CD4-positive, alpha-beta T cell (primary cell): ENCODE measurements at regions of chr13 and their contacts with region 1.

Region 1: DNA sequence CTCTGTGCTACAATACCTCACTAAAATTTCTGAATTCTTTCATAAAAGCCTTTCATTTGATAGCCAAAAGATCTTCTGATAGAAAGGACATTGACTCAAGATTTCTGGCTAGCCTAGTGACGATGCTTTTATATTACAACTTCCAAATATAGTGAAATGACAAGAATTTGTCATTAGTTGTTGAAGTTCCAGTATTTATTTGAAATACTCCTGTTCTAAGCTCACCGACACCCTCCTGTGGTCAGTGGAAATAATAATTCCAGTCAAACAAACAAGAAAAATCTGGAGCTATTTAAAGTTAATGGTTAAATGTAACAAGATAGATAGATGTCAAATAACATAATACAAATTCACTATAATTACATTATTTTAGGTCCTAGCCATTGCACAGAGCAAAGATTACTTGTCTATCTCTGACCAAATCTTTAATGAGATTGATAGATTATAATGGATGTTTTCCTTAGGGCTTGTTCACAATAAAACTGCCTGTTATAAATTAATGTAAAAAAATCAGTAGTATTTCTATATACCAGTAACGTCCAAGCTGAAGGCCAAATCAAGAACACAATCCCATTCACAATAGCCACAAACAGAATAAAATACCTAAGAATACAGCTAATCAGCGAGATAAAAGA is 195.5 kb downstream of the RGCC start:
- DNase-seq: peak in 12 of 14 experiments; percentile 7 to 73 (median 32)
- ATAC-seq: peak; percentile 60
- H3K4me3 ChIP-seq: no peak overlapping the region
- H3K4me3 Mint-ChIP-seq: no peak overlapping the region
- H3K27ac ChIP-seq: no peak overlapping the region
- H3K27ac Mint-ChIP-seq: no peak overlapping the region
- H3K4me1 ChIP-seq: no peaks in the 10 kb centered on the region
- H3K4me1 Mint-ChIP-seq: peaks cover 29% of the 10 kb centered on the region
- H3K27me3 ChIP-seq: no peaks in the 10 kb centered on the region
- H3K27me3 Mint-ChIP-seq: no peaks in the 10 kb centered on the region
- CTCF ChIP-seq: peak; percentile 73

Region 2: DNA sequence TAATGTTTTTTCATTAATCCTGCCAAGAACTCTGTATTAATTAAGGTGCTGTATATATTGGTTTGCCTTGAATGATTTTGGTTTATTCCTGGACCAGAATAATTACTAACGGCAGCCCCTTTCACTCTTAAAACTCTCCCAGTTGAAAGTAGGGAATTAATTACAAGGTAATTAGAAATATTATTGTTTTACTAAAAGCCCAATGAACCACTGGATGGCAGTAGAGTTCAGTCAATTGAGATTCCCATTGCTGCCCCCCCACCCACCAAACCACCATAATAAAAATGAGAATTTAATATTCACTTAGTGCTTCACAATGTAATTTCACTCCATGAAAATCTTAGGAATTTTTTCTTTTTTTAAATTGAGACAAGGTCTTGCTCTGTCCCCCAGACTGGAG is 577.8 kb before region 1 on chr13:
- CTCF ChIA-PET with region 1: no interaction called
- POLR2A ChIA-PET with region 1: no interaction called
- intact Hi-C with region 1: loop called in 1 of 2 experiments (anchors 5 kb)
- DNase-seq: peak in 13 of 14 experiments; percentile 3 to 75 (median 20)
- ATAC-seq: peak; percentile 49
- H3K4me3 ChIP-seq: no peak overlapping the region
- H3K4me3 Mint-ChIP-seq: no peak overlapping the region
- H3K27ac ChIP-seq: no peak overlapping the region
- H3K27ac Mint-ChIP-seq: no peak overlapping the region
- H3K4me1 ChIP-seq: no peaks in the 10 kb centered on the region
- H3K4me1 Mint-ChIP-seq: no peaks in the 10 kb centered on the region
- H3K27me3 ChIP-seq: no peaks in the 10 kb centered on the region
- H3K27me3 Mint-ChIP-seq: no peaks in the 10 kb centered on the region
- CTCF ChIP-seq: peak; percentile 53

Region 3: GRCh38 chr13:41222259-41222852 is 430.5 kb before region 1 on chr13:
- CTCF ChIA-PET with region 1: no interaction called
- POLR2A ChIA-PET with region 1: no interaction called
- intact Hi-C with region 1: loop called in 1 of 2 experiments (anchors 10 kb)
- DNase-seq: peak in 13 of 14 experiments; percentile 27 to 74 (median 38)
- ATAC-seq: peak; percentile 91
- H3K4me3 ChIP-seq: no peak overlapping the region
- H3K4me3 Mint-ChIP-seq: no peak overlapping the region
- H3K27ac ChIP-seq: no peak overlapping the region
- H3K27ac Mint-ChIP-seq: no peak overlapping the region
- H3K4me1 ChIP-seq: no peaks in the 10 kb centered on the region
- H3K4me1 Mint-ChIP-seq: no peaks in the 10 kb centered on the region
- H3K27me3 ChIP-seq: no peaks in the 10 kb centered on the region
- H3K27me3 Mint-ChIP-seq: no peaks in the 10 kb centered on the region
- CTCF ChIP-seq: peak; percentile 82

Region 4: GRCh38 chr13:41352935-41353840 is 299.7 kb before region 1 on chr13:
- CTCF ChIA-PET with region 1: interaction called, 5 read pairs
- POLR2A ChIA-PET with region 1: no interaction called
- intact Hi-C with region 1: loop called (anchors 1 to 5 kb)
- DNase-seq: peak; percentile 15 to 85 (median 46)
- ATAC-seq: peak; percentile 51
- H3K4me3 ChIP-seq: no peak overlapping the region
- H3K4me3 Mint-ChIP-seq: peak overlapping the region; percentile 44
- H3K27ac ChIP-seq: peak overlapping the region; percentile 25 to 56
- H3K27ac Mint-ChIP-seq: peak overlapping the region; percentile 72
- H3K4me1 ChIP-seq: peaks cover 34% of the 10 kb centered on the region
- H3K4me1 Mint-ChIP-seq: peaks cover 57% of the 10 kb centered on the region
- H3K27me3 ChIP-seq: no peaks in the 10 kb centered on the region
- H3K27me3 Mint-ChIP-seq: no peaks in the 10 kb centered on the region
- CTCF ChIP-seq: peak; percentile 76

Region 5: DNA sequence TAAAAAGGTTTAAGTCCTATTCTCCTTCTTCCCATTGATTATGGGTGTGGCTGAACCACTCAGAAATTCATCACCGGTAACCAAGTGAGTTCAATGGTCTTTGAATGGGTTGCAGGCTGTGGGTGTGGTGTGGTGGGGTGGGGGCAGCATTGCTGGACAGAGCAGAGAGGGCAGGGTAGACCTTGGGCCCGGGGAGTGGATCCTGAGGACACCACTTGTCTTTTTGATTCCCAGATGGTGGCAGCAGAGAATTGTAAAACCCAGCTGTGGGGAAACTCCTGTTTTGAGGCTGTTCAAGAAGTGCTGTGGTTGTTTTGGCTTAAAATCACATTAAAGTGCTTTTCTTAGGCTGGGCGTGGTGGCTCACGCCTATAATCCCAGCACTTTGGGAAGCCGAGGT is 241.3 kb before region 1 on chr13:
- CTCF ChIA-PET with region 1: interaction called, 12 read pairs
- POLR2A ChIA-PET with region 1: interaction called, 6 read pairs
- intact Hi-C with region 1: loop called (anchors 1 to 2 kb)
- DNase-seq: peak in 9 of 14 experiments; percentile 9 to 75 (median 20)
- ATAC-seq: no peak
- H3K4me3 ChIP-seq: no peak overlapping the region
- H3K4me3 Mint-ChIP-seq: no peak overlapping the region
- H3K27ac ChIP-seq: no peak overlapping the region
- H3K27ac Mint-ChIP-seq: no peak overlapping the region
- H3K4me1 ChIP-seq: peaks cover 4% of the 10 kb centered on the region
- H3K4me1 Mint-ChIP-seq: peaks cover 5% of the 10 kb centered on the region
- H3K27me3 ChIP-seq: no peaks in the 10 kb centered on the region
- H3K27me3 Mint-ChIP-seq: no peaks in the 10 kb centered on the region
- CTCF ChIP-seq: peak; percentile 49

Region 6: GRCh38 chr13:41428155-41428554 is 224.7 kb before region 1 on chr13:
- CTCF ChIA-PET with region 1: no interaction called
- POLR2A ChIA-PET with region 1: no interaction called
- intact Hi-C with region 1: loop called in 1 of 2 experiments (anchors 5 kb)
- DNase-seq: peak in 13 of 14 experiments; percentile 2 to 70 (median 40)
- ATAC-seq: peak; percentile 81
- H3K4me3 ChIP-seq: peak overlapping the region; percentile 29
- H3K4me3 Mint-ChIP-seq: no peak overlapping the region
- H3K27ac ChIP-seq: no peak overlapping the region
- H3K27ac Mint-ChIP-seq: no peak overlapping the region
- H3K4me1 ChIP-seq: peaks cover 10% of the 10 kb centered on the region
- H3K4me1 Mint-ChIP-seq: peaks cover 7% of the 10 kb centered on the region
- H3K27me3 ChIP-seq: peaks cover 0 to 3% of the 10 kb centered on the region in 2 experiments
- H3K27me3 Mint-ChIP-seq: peaks cover 6% of the 10 kb centered on the region
- CTCF ChIP-seq: no peak

Region 7: GRCh38 chr13:41456768-41457588 is 195.9 kb before region 1 on chr13 and contains the start of gene RGCC:
- CTCF ChIA-PET with region 1: interaction called, 5 read pairs
- POLR2A ChIA-PET with region 1: interaction called, 24 read pairs
- intact Hi-C with region 1: loop called in 1 of 2 experiments (anchors 2 kb)
- DNase-seq: peak; percentile 74 to 99 (median 94)
- ATAC-seq: peak; percentile 72
- H3K4me3 ChIP-seq: peak within 1 kb of the TSS; percentile 92
- H3K4me3 Mint-ChIP-seq: peak within 1 kb of the TSS; percentile 94
- H3K27ac ChIP-seq: peak within 1 kb of the TSS; percentile 92 to 93
- H3K27ac Mint-ChIP-seq: peak within 1 kb of the TSS; percentile 98
- H3K4me1 ChIP-seq: peaks cover 38% of the 10 kb centered on the region
- H3K4me1 Mint-ChIP-seq: peaks cover 46% of the 10 kb centered on the region
- H3K27me3 ChIP-seq: no peaks in the 10 kb centered on the region
- H3K27me3 Mint-ChIP-seq: no peaks in the 10 kb centered on the region
- CTCF ChIP-seq: no peak
- total RNA-seq, gene RGCC: 752 to 758 TPM